Gastrocnemius medialis (tissue), 4 donors: ENCODE measurements at regions of chr13 and their contacts with region 1.

Region 1: GRCh38 chr13:31853643-31854326 is 114.5 kb downstream of the RXFP2 start:
- DNase-seq: no peak
- ATAC-seq: no peak
- H3K4me3 ChIP-seq: no peak overlapping the region
- H3K27ac ChIP-seq: no peak overlapping the region
- H3K4me1 ChIP-seq: no peaks in the 10 kb centered on the region
- H3K27me3 ChIP-seq: no peaks in the 10 kb centered on the region
- CTCF ChIP-seq: no peak
- POLR2A ChIP-seq: no peak

Region 2: DNA sequence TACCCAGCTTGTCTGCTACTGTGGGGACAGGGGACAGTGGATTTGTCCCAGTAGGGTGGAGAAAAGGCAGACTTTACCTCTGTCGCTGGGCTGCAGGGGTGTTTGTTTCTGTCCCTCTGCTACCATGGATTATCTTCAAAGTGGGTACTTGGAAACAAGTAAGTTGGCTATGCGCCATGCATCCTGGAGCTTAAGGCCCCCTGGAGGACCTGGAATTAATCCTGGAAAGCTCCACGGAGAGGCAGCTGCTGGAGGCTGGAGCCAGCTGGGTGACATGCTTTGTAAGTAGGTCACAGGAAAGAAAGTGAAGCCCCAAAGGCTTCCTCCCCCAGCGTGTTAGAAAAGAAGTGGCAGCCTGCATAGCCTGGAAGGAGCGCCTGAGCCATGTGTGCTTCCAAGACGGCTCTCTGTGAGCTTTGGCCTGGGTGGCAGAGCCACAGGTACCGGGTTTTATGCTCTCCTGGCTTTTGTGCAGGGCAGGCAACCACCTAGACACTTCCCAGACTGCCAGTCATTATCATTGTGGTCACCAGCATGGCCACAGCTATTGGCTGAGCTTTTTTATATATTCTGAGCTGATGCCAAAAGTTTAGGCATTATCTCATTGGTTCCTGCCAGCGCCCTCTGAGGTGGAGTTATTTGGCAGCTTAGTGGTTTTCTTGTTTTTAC is 644.5 kb before region 1 on chr13:
- in situ Hi-C with region 1: no loop called
- intact Hi-C with region 1: loop called (anchors 5 kb)
- DNase-seq: peak; percentile 17 to 59
- ATAC-seq: peak; percentile 70 to 84
- H3K4me3 ChIP-seq: peak overlapping the region in 1 of 4 donors; percentile 1
- H3K27ac ChIP-seq: peak overlapping the region in 3 of 4 donors; percentile 36 to 66 (median 36)
- H3K4me1 ChIP-seq: peaks cover 18 to 22% of the 10 kb centered on the region in 2 donors
- H3K27me3 ChIP-seq: no peaks in the 10 kb centered on the region
- CTCF ChIP-seq: no peak
- POLR2A ChIP-seq: no peak

Region 3: DNA sequence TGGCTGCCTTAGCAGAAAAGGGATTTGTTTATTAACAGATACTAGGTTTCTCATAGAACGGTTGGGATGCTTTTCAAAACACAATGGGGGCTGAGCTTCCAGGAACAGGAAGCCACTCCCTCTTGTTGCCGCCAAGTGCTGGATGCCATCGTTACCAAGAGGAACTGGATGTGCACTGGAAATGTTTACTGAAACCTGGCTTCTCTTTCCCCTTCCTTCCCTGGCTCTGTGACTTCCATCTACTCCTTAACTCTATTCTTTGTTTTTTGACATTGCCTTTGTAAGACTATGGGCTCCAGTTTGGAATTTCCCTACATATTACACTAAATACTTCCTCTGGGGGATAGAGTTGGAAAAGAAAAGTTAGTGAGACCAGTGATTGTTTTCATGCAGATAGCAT is 1150.7 kb after region 1 on chr13:
- in situ Hi-C with region 1: no loop called
- intact Hi-C with region 1: no loop called
- DNase-seq: peak in 1 of 2 donors; percentile 31
- ATAC-seq: peak; percentile 70 to 76
- H3K4me3 ChIP-seq: no peak overlapping the region
- H3K27ac ChIP-seq: peak overlapping the region; percentile 46 to 75 (median 61)
- H3K4me1 ChIP-seq: peaks cover 3 to 18% of the 10 kb centered on the region in 2 donors
- H3K27me3 ChIP-seq: no peaks in the 10 kb centered on the region
- CTCF ChIP-seq: no peak
- POLR2A ChIP-seq: no peak